ENCODE measurements at regions of chr15 and their contacts with region 1.

Region 1: DNA sequence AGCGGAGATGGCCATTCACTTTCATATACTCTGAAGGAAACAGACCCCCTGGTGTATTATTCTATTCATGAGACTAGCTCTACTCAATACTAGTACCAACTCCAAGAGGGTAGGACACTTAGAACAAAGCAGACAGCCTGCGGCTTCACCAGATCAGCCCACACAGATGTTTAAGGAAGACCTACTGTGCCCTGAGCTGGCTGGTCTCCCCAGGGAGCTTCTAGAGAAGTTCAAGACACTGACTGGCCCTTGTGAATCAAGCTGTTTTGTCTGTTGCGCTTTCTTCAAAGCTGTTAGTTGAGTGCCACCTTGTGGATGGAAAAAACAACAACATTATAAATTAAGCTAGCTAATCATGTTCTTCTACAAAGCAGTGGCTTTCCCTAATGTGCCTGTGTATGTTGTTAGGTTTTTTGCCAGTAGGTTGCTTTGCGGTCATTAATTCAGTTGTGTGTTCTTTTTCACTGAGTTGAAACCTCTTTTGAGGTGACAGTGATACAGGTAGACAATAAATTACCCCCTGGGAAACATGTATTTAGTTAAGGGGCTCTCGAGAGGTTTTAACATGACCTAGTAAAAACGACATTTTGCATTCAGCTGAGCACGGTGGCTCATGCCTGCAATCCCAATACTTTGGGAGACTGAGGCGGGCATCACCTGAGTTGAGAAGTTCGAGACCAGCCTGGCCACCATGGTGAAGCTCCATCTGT is 64.2 kb upstream of the MYZAP start:
- DNase-seq: no peak
- ATAC-seq: peak; percentile 76

Region 2: DNA sequence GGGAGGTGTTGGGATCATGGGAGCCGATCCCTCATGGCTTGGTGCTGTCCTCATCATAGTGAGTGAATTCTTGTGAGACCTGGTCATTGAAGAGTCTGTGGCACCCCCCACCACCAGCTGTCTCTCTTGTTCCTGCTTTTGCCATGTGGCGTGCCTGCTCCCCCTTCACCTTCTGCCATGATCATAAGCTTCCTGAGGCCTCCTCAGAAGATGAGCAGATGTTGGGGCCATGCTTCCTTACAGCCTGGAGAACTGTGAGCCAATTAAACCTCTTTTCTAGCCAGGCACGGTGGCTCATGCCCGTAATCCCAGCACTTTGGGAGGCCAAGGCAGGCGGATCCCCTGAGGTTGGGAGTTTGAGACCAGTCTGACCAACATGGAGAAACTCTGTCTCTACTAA is 188.2 kb before region 1 on chr15:
- intact Hi-C with region 1: loop called (anchors 1 kb)
- DNase-seq: no peak
- ATAC-seq: no peak

Region 3: GRCh38 chr15:57353317-57353804 is 174.2 kb before region 1 on chr15:
- intact Hi-C with region 1: no loop called
- DNase-seq: no peak
- ATAC-seq: no peak

Region 4: DNA sequence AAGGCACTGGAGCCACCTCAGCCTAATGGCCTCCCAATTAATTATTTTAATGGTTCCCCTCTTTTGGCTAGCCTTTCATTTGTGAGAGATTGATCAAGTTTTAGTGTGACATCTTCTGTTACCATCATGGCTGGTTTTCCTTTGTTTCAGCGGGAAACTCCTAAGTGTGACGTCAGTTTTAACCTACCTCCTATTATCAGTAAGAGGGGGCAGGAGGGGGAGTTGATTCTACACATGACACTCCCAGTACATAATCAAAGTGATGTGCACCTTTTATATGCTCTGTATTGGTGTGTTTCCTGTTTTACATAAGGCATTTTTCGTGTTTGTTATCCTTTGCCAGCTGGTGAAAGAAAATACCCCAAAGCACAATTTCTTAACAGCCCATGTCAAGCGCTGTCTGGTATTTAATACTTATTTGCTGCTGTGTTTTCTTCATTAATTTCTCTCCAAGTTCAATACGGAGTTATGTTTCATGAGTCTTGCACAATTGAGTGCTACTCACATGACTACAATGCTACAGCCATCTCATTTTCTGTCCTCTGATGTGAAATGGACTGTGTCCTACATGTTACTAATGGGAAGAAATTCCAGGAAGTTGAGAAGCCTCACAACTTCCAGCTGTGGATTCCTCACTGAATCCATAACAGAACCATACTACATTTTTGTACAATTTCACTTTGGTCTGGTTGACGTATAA is 126.8 kb after region 1 on chr15:
- intact Hi-C with region 1: no loop called
- DNase-seq: no peak
- ATAC-seq: peak; percentile 20